ENCODE measurements at regions of chr3 and their contacts with region 1.

Region 1: DNA sequence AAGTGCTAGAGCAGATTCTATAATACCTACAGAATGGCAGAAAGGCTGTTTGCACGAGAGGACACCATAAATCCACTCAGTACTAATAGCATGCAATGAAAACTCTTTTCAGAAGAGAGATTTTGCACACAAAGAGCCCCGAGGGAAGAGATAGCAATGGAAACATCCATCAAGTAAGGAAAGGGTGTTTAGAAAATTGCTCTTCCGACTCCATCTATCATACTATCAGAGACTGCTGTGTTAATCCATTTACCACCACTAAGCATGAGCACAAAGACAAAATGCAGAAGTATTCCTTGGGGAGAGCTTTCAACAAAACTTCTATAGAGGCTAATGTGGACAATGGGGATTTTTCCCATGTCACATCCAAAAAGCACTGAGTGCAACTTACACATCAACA is 72.1 kb upstream of the PLAAT1 start:
- DNase-seq: no peak
- ATAC-seq: no peak
- H3K4me3 ChIP-seq: no peak overlapping the region
- H3K27ac ChIP-seq: no peak overlapping the region
- H3K4me1 ChIP-seq: no peaks in the 10 kb centered on the region
- H3K27me3 ChIP-seq: no peaks in the 10 kb centered on the region
- CTCF ChIP-seq: no peak
- EP300 ChIP-seq: no peak
- POLR2A ChIP-seq: no peak
- RAD21 ChIP-seq: no peak

Region 2: DNA sequence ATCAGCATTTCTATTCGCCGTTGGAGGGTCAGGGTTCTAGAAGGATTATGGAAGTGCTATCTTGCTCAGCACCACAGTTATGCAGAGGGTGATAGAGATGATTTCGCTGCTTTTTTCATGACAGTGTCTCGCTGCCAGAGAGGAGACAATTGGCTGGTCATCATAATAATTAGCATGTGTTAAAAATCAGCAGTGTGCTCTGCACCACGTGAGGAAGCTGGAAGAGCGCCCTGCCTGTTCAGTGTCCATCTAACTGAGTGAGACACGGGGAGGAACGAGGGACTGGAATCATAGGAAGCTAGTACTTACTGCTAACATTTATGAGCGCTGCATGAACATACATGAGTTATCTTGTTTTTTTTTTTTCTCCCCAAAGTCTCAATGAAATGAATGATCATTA is 44.0 kb before region 1 on chr3:
- CTCF ChIA-PET with region 1: no interaction called
- POLR2A ChIA-PET with region 1: no interaction called
- RAD21 ChIA-PET with region 1: no interaction called
- SMC1A ChIA-PET with region 1: no interaction called
- in situ Hi-C with region 1: no loop called
- intact Hi-C with region 1: no loop called
- DNase-seq: no peak
- ATAC-seq: no peak
- H3K4me3 ChIP-seq: no peak overlapping the region
- H3K27ac ChIP-seq: no peak overlapping the region
- H3K4me1 ChIP-seq: no peaks in the 10 kb centered on the region
- H3K27me3 ChIP-seq: no peaks in the 10 kb centered on the region; a peak in 1 of 4 replicates
- CTCF ChIP-seq: no peak
- EP300 ChIP-seq: no peak
- POLR2A ChIP-seq: no peak
- RAD21 ChIP-seq: no peak

Region 3: DNA sequence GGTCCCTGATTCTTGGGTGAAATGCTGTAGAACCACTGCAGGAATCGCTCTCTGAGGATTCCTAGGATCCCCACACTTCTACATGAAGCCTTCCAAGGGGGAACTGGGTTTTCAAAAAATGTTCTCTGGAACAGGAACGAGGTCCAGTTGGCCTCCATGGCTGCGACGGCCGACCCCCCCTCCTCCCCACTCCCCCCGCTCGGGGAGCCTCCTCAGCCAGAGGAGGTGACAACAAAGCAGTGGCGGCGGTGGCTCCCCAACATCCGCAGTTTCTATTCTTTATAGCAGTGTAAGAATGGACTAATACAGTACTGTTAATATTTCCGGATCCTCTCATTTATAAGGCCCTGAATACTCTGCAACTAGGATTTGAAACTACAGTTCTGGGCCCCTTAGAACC is 11.9 kb before region 1 on chr3:
- CTCF ChIA-PET with region 1: no interaction called
- POLR2A ChIA-PET with region 1: no interaction called
- RAD21 ChIA-PET with region 1: no interaction called
- SMC1A ChIA-PET with region 1: no interaction called
- in situ Hi-C with region 1: no loop called
- intact Hi-C with region 1: loop called (anchors 1 kb)
- DNase-seq: no peak
- ATAC-seq: no peak
- H3K4me3 ChIP-seq: no peak overlapping the region
- H3K27ac ChIP-seq: no peak overlapping the region
- H3K4me1 ChIP-seq: no peaks in the 10 kb centered on the region
- H3K27me3 ChIP-seq: no peaks in the 10 kb centered on the region; a peak in 1 of 4 replicates
- CTCF ChIP-seq: no peak
- EP300 ChIP-seq: no peak
- POLR2A ChIP-seq: no peak
- RAD21 ChIP-seq: no peak

Measured in GM12878 (cell line).